ENCODE measurements at regions of chr11 and their contacts with region 1.

Region 1: DNA sequence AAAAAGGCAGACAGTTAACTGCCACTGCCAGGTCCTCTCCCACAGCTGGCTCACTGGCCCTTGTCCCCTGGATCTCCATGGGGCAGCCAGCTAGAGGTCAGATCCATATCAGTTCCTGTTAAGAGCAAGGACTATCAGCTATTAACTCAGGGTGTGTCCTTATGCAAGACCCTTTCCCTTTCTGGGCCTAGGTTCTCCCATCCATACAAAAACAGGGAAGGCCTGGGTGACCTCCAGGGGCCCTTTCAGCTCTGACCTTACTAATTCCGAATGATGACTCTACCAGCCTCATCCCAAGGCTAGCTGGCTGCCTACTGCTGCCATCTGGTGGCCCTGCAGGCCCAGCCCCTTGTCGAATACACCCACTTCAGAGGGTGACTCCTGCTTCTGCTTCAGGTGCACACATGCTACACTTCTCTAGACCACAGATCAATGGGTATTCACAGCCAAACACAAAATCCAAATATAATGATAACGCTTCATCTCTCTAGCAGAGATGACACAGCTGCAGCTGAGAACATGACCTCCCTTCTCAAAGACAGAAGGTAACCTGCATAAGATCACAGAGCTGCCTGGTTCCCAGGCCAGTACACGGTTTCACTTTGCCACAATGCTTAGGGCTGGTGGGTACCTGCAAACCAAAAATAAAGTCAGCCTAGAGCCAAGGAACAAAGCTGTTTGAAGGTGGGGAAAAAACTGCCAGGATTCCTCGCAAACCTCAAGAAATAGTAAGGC is 34.1 kb downstream of the SERGEF start:
- DNase-seq: peak; percentile 73
- ATAC-seq: peak; percentile 97
- H3K4me3 Mint-ChIP-seq: no peak overlapping the region
- H3K27ac Mint-ChIP-seq: 0 out of 2 replicates have a peak overlapping the region, but pooled peaks have one; percentile 86
- H3K4me1 Mint-ChIP-seq: no peaks in the 10 kb centered on the region
- H3K27me3 Mint-ChIP-seq: no peaks in the 10 kb centered on the region
- CTCF ChIP-seq: no peak; the same call in 1 of the 2 replicates

Region 2: DNA sequence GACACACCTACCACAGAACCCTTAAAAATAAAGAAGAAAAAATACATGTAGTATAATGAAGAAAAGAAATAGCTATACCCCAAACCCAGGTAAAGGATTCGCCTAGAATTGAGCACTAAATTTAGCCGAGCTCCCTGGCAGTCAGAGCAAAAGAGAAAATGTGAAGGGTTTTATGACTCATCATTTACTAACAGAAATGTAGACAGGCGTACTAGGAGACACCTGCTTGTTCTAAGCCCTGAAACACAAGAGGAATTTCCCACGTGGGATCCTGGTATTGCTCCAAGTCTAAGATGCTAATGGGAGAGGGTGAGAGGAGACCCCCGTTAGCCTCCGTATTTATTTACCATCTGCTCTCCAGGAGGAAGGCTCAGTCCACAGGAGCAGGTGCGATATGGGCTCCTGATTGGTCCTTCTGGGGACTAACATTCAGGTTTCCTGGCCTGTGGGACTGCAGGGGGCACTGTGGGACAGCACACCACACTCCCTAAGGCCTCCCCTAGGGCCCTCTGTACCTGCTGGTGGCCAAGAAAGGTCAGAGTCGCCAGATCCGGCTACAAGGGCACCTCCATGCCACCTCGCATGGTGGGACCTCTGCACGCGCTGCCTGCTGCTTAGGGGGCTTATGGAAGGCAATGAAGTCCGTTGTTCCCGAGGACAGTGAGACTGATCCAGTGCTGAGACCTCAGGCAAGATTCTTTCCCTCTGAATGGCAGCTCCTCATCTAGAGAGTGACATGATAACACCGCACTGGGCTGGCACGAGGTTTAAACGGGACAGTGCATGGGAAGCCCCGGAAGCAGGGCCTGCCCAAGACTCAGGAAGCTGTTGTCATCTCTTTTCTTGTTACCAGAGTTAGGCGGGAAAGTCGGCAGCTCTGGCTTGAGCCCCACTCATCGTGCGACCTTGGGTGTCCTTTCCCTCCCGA is 218.4 kb before region 1 on chr11:
- CTCF ChIA-PET with region 1: interaction called, 70 read pairs
- POLR2A ChIA-PET with region 1: no interaction called
- DNase-seq: peak; percentile 87
- ATAC-seq: peak; percentile 98
- H3K4me3 Mint-ChIP-seq: no peak overlapping the region
- H3K27ac Mint-ChIP-seq: no peak overlapping the region
- H3K4me1 Mint-ChIP-seq: 0 out of 2 replicates have a peak, but pooled peaks cover 4% of the 10 kb centered on the region
- H3K27me3 Mint-ChIP-seq: no peaks in the 10 kb centered on the region; the same call in 1 of the 2 replicates
- CTCF ChIP-seq: peak; percentile 28; the same call in 1 of the 2 replicates

Region 3: GRCh38 chr11:17803754-17804334 is 174.9 kb before region 1 on chr11:
- CTCF ChIA-PET with region 1: interaction called, 10 read pairs
- POLR2A ChIA-PET with region 1: no interaction called
- DNase-seq: no peak
- ATAC-seq: no peak
- H3K4me3 Mint-ChIP-seq: no peak overlapping the region
- H3K27ac Mint-ChIP-seq: no peak overlapping the region; the same call in 1 of the 2 replicates
- H3K4me1 Mint-ChIP-seq: peaks cover 24% of the 10 kb centered on the region
- H3K27me3 Mint-ChIP-seq: no peaks in the 10 kb centered on the region; the same call in none of the 2 replicates
- CTCF ChIP-seq: no peak

Region 4: GRCh38 chr11:17927681-17928347 is 50.9 kb before region 1 on chr11:
- CTCF ChIA-PET with region 1: interaction called, 17 read pairs
- POLR2A ChIA-PET with region 1: no interaction called
- DNase-seq: no peak
- ATAC-seq: no peak
- H3K4me3 Mint-ChIP-seq: no peak overlapping the region
- H3K27ac Mint-ChIP-seq: peak overlapping the region; percentile 30; the same call in 1 of the 2 replicates
- H3K4me1 Mint-ChIP-seq: peaks cover 28% of the 10 kb centered on the region
- H3K27me3 Mint-ChIP-seq: no peaks in the 10 kb centered on the region
- CTCF ChIP-seq: no peak

Region 5: GRCh38 chr11:17967661-17968060 is 11.1 kb before region 1 on chr11:
- CTCF ChIA-PET with region 1: interaction called, 13 read pairs
- POLR2A ChIA-PET with region 1: no interaction called
- DNase-seq: no peak
- ATAC-seq: no peak
- H3K4me3 Mint-ChIP-seq: no peak overlapping the region
- H3K27ac Mint-ChIP-seq: no peak overlapping the region
- H3K4me1 Mint-ChIP-seq: peaks cover 7% of the 10 kb centered on the region; the same call in 1 of the 2 replicates
- H3K27me3 Mint-ChIP-seq: no peaks in the 10 kb centered on the region; the same call in 1 of the 2 replicates
- CTCF ChIP-seq: no peak

Region 6: DNA sequence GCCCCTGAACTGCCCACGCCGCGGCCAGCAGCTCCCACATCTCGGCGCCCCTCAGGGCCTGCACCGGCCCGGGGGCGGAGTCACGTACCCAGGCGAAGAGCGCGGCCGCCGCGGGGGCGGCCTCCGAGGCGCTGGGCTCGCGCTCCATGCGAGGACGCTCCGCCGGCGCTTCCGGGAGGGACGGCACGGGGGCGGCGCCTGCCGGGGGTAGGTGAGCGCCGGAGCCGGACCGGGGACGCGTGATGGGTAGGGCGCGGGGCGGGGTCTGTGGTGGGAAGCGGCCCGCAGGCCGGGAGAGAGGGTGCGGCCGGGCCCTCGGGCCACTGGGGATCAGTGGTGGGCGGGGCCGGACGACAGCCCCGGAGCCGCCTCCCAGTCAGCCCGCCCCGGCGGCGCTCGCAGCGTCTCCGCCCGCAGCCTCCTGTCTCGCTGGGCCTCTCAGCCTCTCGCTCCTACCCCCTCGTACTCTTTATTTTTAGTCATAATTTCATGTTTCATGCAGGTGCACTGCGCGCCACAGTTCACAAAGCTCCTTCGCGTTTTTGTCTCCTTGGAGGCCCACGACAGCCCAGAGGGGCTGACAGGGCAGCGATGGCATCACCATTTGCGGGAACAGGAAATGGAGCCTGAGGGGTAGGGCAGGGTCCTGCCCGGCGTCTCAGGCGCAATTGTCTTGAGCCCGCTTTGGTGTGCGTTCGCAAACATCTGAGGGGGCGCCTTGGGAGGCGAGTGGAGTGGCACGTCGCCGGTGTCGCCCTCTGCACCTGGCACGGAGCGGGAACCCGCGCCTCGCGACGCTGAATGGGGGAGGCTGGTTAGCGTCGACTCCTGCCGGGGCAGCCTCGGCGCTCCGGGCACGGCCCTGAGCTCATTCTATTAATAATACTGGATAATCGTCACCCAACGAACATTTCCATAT is 34.4 kb after region 1 on chr11 and contains the start of gene SERGEF:
- CTCF ChIA-PET with region 1: no interaction called
- POLR2A ChIA-PET with region 1: no interaction called
- DNase-seq: peak; percentile 94
- ATAC-seq: peak; percentile 94
- H3K4me3 Mint-ChIP-seq: peak within 1 kb of the TSS; percentile 100
- H3K27ac Mint-ChIP-seq: peak within 1 kb of the TSS; percentile 99
- H3K4me1 Mint-ChIP-seq: peaks cover 31% of the 10 kb centered on the region
- H3K27me3 Mint-ChIP-seq: peaks cover 27% of the 10 kb centered on the region
- CTCF ChIP-seq: no peak
- total RNA-seq, gene SERGEF: 35.5 to 45.2 TPM (median 45.1 TPM) in 3 replicates

Region 7: DNA sequence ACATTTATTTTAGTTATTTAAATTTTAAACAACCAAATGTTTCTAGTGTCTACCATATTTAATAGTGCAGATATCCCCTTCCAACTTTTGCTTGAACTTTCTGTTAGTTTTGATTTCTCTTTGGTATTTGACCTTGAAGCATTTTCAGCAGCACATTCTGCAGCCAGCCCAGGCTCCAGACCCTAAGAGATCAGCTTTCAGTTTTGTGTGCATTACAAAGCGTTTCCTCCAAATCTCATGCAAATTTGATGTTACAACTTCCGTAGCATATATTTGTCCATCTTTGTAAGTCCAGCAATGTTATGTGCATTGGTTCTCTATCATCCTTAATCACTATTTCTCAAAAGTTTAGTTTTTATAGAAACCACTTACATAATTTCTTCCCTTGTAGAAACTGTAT is 48.8 kb after region 1 on chr11:
- CTCF ChIA-PET with region 1: no interaction called
- POLR2A ChIA-PET with region 1: no interaction called
- DNase-seq: no peak
- ATAC-seq: no peak
- H3K4me3 Mint-ChIP-seq: no peak overlapping the region
- H3K27ac Mint-ChIP-seq: no peak overlapping the region
- H3K4me1 Mint-ChIP-seq: peaks cover 12% of the 10 kb centered on the region
- H3K27me3 Mint-ChIP-seq: peaks cover 3% of the 10 kb centered on the region
- CTCF ChIP-seq: no peak

Measured in WTC11 (cell line).